Upper lobe of right lung (tissue), 1 donor: ENCODE measurements at regions of chr2 and their contacts with region 1.

Region 1: GRCh38 chr2:229586746-229587705 is 127.3 kb downstream of the DNER start:
- DNase-seq: peak; percentile 87
- ATAC-seq: peak; percentile 97
- H3K4me3 ChIP-seq: peak overlapping the region; percentile 21
- H3K27ac ChIP-seq: no peak overlapping the region
- H3K4me1 ChIP-seq: no peaks in the 10 kb centered on the region
- H3K27me3 ChIP-seq: peaks cover 7% of the 10 kb centered on the region
- CTCF ChIP-seq: peak; percentile 88

Region 2: GRCh38 chr2:229342376-229342775 is 244.7 kb before region 1 on chr2:
- intact Hi-C with region 1: loop called (anchors 5 kb)
- DNase-seq: peak; percentile 76
- ATAC-seq: peak; percentile 71
- H3K4me3 ChIP-seq: no peak overlapping the region
- H3K27ac ChIP-seq: no peak overlapping the region
- H3K4me1 ChIP-seq: no peaks in the 10 kb centered on the region
- H3K27me3 ChIP-seq: no peaks in the 10 kb centered on the region
- CTCF ChIP-seq: peak; percentile 60

Region 3: DNA sequence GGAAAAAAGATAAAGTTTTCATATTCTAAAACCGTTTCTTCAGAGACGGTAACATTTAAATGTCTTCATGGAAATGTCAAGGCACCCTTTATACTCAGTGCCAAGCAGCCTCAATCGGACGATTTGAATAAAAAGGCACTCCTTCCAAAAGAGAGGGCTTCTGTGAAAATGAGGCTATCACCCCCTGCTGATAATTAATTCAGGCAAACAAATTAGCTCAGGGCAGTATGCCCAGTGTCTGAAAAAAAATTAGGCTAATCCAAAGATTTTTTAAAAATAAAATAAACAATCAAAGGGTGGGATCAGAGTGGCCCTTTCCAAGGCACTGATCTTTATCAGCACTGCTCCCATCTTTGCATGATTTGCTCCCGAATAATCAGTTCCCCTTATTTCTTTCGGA is 165.0 kb before region 1 on chr2:
- intact Hi-C with region 1: loop called (anchors 10 kb)
- DNase-seq: no peak
- ATAC-seq: no peak
- H3K4me3 ChIP-seq: no peak overlapping the region
- H3K27ac ChIP-seq: no peak overlapping the region
- H3K4me1 ChIP-seq: peaks cover 5% of the 10 kb centered on the region
- H3K27me3 ChIP-seq: no peaks in the 10 kb centered on the region
- CTCF ChIP-seq: no peak

Region 4: DNA sequence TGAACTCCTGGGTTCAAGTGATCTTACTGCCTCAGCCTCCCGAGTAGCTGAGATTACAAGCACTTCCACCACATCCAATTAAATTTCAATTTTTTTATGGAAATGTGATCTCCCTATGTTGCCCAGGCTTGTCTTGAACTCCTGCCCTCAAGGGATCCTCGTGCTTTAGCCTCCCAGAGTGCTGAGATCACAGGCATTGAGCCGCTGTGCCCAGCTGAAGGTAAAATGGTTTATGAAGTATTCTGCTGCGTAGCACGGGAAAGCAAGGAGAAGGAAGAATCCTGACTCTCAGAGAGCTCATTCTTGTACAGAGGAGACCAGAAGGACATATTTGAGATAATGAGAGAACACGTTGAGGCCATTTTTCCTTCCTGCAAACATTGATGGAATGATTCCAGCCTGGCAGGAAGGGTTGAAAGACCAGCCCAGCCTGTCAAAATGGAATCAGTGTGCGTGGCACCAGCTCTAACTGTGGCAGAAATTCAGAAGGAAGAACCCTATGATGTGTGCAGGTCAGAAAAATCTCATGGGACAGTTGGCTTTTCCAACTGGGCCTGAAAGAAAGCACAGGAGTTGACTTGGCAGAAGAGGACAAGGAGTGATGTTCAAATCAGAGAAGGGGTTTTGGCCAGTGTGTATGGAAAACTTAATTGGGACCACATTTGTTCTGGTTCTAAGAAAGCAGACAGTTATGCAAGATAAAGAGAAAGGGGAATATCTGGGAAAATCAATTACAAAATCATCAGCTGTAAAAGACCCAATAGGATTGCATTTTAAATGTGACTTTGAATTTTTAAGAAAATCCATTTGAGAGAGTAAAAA is 123.3 kb before region 1 on chr2:
- intact Hi-C with region 1: no loop called
- DNase-seq: no peak
- ATAC-seq: no peak
- H3K4me3 ChIP-seq: no peak overlapping the region
- H3K27ac ChIP-seq: no peak overlapping the region
- H3K4me1 ChIP-seq: no peaks in the 10 kb centered on the region
- H3K27me3 ChIP-seq: no peaks in the 10 kb centered on the region
- CTCF ChIP-seq: no peak